ENCODE measurements at regions of chr2 and their contacts with region 1.

Region 1: DNA sequence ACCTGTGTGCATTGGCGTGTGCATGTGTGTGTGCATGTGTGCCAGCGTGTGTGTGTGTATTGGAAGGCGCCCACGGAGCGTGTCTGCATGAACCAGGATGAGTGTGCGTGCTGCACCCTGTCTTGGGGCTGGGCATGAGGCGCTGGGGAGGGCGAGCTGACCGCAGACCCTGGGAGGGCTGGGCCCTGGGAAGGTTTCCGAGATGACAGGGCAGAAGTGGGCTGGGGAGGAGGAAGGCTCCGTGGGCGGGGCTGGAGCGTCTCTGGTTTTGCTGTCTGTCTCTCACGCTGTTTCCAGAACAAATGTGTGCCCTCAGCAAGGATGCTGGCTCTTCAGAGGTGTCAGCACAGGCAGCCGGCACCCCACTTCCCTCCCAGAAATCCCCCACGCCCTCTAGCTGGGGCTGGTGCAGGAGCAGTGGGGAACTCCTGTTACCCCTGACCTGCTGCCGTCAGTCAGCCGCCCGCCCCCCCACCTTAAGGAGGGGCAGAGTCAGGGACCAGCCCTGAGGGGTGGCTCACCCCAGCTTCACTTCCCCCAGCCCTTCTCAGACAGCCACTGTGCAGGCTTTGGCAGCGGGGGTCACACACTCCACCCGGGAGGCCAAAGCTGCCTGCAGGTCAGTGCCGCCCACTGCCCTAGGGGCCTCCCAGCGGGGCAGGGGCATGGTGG is at the start of gene GPR35:
- DNase-seq: peak; percentile 82
- ATAC-seq: peak; percentile 59
- H3K4me3 Mint-ChIP-seq: peak within 1 kb of the TSS; percentile 83
- H3K27ac Mint-ChIP-seq: peak within 1 kb of the TSS; percentile 100
- H3K4me1 Mint-ChIP-seq: peaks cover 49% of the 10 kb centered on the region
- H3K27me3 Mint-ChIP-seq: no peaks in the 10 kb centered on the region
- total RNA-seq, gene GPR35: 19.2 to 19.3 TPM

Region 2: GRCh38 chr2:240501531-240501991 is 123.5 kb before region 1 on chr2:
- POLR2A ChIA-PET with region 1: no interaction called
- DNase-seq: no peak
- ATAC-seq: no peak
- H3K4me3 Mint-ChIP-seq: no peak overlapping the region
- H3K27ac Mint-ChIP-seq: no peak overlapping the region
- H3K4me1 Mint-ChIP-seq: no peaks in the 10 kb centered on the region
- H3K27me3 Mint-ChIP-seq: no peaks in the 10 kb centered on the region

Region 3: GRCh38 chr2:240560480-240561326 is 64.4 kb before region 1 on chr2:
- POLR2A ChIA-PET with region 1: interaction called, 39 read pairs
- DNase-seq: peak; percentile 100
- ATAC-seq: peak; percentile 47
- H3K4me3 Mint-ChIP-seq: peak overlapping the region; percentile 83
- H3K27ac Mint-ChIP-seq: peak overlapping the region; percentile 75
- H3K4me1 Mint-ChIP-seq: peaks cover 58% of the 10 kb centered on the region
- H3K27me3 Mint-ChIP-seq: no peaks in the 10 kb centered on the region

Region 4: GRCh38 chr2:240611601-240612210 is 13.4 kb before region 1 on chr2:
- POLR2A ChIA-PET with region 1: interaction called, 48 read pairs
- DNase-seq: peak; percentile 47
- ATAC-seq: peak; percentile 34
- H3K4me3 Mint-ChIP-seq: no peak overlapping the region
- H3K27ac Mint-ChIP-seq: no peak overlapping the region
- H3K4me1 Mint-ChIP-seq: peaks cover 23% of the 10 kb centered on the region
- H3K27me3 Mint-ChIP-seq: no peaks in the 10 kb centered on the region

Region 5: GRCh38 chr2:241859436-241860183 is 1234.5 kb after region 1 on chr2:
- POLR2A ChIA-PET with region 1: no interaction called
- DNase-seq: no peak
- ATAC-seq: peak; percentile 32
- H3K4me3 Mint-ChIP-seq: peak overlapping the region; percentile 83
- H3K27ac Mint-ChIP-seq: peak overlapping the region; percentile 92
- H3K4me1 Mint-ChIP-seq: peaks cover 35% of the 10 kb centered on the region
- H3K27me3 Mint-ChIP-seq: peaks cover 15% of the 10 kb centered on the region